ENCODE measurements at regions of chr11 and their contacts with region 1.

Region 1: GRCh38 chr11:57667736-57668435 is at the start of gene ZDHHC5:
- DNase-seq: peak; percentile 98 to 100
- H3K4me3 ChIP-seq: peak within 1 kb of the TSS; percentile 84
- H3K27ac ChIP-seq: peak within 1 kb of the TSS; percentile 91
- H3K4me1 ChIP-seq: peaks cover 26% of the 10 kb centered on the region
- H3K27me3 ChIP-seq: no peaks in the 10 kb centered on the region
- CTCF ChIP-seq: peak; percentile 56; the same call in 1 of the 2 replicates
- total RNA-seq, gene ZDHHC5: 94.2 and 101 TPM in 2 replicates

Region 2: GRCh38 chr11:57712256-57713150 is 44.6 kb after region 1 on chr11 and contains the start of gene TMX2:
- CTCF ChIA-PET with region 1: no interaction called
- POLR2A ChIA-PET with region 1: interaction called, 4 read pairs
- intact Hi-C with region 1: loop called (anchors 1 kb)
- DNase-seq: peak; percentile 94 to 100
- H3K4me3 ChIP-seq: peak within 1 kb of the TSS; percentile 97
- H3K27ac ChIP-seq: peak within 1 kb of the TSS; percentile 75
- H3K4me1 ChIP-seq: peaks cover 25% of the 10 kb centered on the region
- H3K27me3 ChIP-seq: no peaks in the 10 kb centered on the region
- CTCF ChIP-seq: no peak
- total RNA-seq, gene TMX2: 124 and 138 TPM in 2 replicates

Region 3: DNA sequence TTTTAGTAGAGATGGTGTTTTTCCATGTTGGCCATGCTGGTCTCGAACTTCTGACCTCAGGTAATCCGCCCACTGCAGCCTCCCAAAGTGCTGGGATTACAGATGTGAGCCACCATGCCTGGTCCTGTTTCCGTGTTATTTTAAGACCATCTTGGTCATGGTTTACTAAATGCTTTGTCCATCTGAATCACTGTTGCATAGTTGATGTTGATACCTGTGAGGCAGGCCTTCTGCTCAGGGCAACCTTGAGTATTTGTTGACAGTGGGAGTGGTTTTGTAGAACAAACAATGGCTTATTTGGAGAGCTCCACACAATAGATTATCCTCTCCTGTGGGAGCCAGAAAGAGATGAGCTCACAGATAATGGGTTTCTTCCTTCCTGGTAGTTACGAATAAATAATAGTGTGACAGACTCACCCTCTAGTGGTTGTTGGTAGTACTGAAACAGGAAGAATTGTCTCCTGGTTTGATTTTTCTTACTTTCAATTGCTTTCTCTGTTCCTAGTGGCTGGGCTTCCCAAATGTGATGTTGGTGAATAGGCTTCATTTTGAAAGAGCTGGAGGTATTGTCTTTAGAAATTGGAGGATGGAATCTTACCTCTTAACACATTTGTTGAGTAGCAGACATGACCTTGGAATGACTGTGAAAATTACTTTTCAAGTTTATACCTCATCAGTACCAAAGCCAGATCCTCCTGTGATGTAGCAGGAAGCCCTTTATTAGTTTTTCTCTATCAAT is 132.7 kb after region 1 on chr11:
- CTCF ChIA-PET with region 1: interaction called, 3 read pairs
- POLR2A ChIA-PET with region 1: no interaction called
- intact Hi-C with region 1: loop called (anchors 1 kb)
- DNase-seq: peak; percentile 71 to 100
- H3K4me3 ChIP-seq: peak overlapping the region; percentile 3; the same call in 1 of the 2 replicates
- H3K27ac ChIP-seq: peak overlapping the region; percentile 94
- H3K4me1 ChIP-seq: peaks cover 35% of the 10 kb centered on the region
- H3K27me3 ChIP-seq: no peaks in the 10 kb centered on the region
- CTCF ChIP-seq: peak; percentile 98

Region 4: GRCh38 chr11:58394195-58394594 is 726.3 kb after region 1 on chr11:
- CTCF ChIA-PET with region 1: no interaction called
- POLR2A ChIA-PET with region 1: no interaction called
- intact Hi-C with region 1: loop called (anchors 5 kb)
- DNase-seq: peak; percentile 14 to 79
- H3K4me3 ChIP-seq: no peak overlapping the region
- H3K27ac ChIP-seq: no peak overlapping the region
- H3K4me1 ChIP-seq: peaks cover 30% of the 10 kb centered on the region
- H3K27me3 ChIP-seq: no peaks in the 10 kb centered on the region
- CTCF ChIP-seq: no peak

Region 5: GRCh38 chr11:58579192-58580129 is 911.6 kb after region 1 on chr11:
- CTCF ChIA-PET with region 1: no interaction called
- POLR2A ChIA-PET with region 1: no interaction called
- intact Hi-C with region 1: loop called (anchors 1 kb)
- DNase-seq: peak; percentile 68 to 85
- H3K4me3 ChIP-seq: peak overlapping the region; percentile 82
- H3K27ac ChIP-seq: peak overlapping the region; percentile 86
- H3K4me1 ChIP-seq: peaks cover 59% of the 10 kb centered on the region
- H3K27me3 ChIP-seq: no peaks in the 10 kb centered on the region
- CTCF ChIP-seq: peak; percentile 77